Activated CD8-positive, alpha-beta T cell treated with anti-CD3 and anti-CD28 coated beads, Interleukin-2, amount 10 ng/mL, durations not matched to agents 7 days and 5 days (primary cell): ENCODE measurements at regions of chr1 and their contacts with region 1.

Region 1: GRCh38 chr1:205061665-205062069 is 18.7 kb downstream of the CNTN2 start:
- DNase-seq: peak; percentile 81
- ATAC-seq: peak; percentile 72
- H3K4me3 Mint-ChIP-seq: no peak overlapping the region
- H3K27ac Mint-ChIP-seq: no peak overlapping the region
- H3K4me1 Mint-ChIP-seq: no peaks in the 10 kb centered on the region
- H3K27me3 Mint-ChIP-seq: no peaks in the 10 kb centered on the region

Region 2: GRCh38 chr1:204941421-204942338 is 120.0 kb before region 1 on chr1:
- CTCF ChIA-PET with region 1: interaction called, 10 read pairs
- POLR2A ChIA-PET with region 1: no interaction called
- DNase-seq: peak; percentile 67
- ATAC-seq: peak; percentile 58
- H3K4me3 Mint-ChIP-seq: no peak overlapping the region
- H3K27ac Mint-ChIP-seq: no peak overlapping the region
- H3K4me1 Mint-ChIP-seq: peaks cover 6% of the 10 kb centered on the region
- H3K27me3 Mint-ChIP-seq: peaks cover 13% of the 10 kb centered on the region

Region 3: DNA sequence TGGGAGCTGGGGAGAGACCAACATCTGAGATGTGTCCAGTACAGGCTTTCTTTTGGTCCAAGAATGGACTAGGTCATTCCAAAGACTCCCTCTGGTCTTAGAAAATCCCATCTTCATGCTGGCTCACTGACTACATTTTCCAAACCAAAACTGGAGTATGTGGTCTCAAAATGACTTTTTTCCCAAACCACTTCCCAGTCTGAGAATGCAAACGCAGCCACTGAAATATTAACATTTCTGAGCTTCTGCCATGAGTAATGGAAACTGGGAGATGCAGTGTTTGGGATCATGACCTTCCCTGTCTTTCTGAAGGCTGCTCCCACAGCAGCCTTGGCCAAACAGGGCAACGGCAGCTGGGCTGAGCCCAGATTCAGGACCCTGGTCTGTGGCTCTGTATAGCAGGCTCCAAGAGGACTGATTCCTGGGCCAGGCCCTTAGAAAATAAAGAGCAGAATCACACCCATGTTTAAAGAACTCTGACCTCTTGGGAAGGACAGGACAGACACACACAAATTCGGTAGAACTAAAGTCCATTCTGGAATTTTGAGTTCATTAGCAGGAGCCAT is 80.7 kb before region 1 on chr1:
- CTCF ChIA-PET with region 1: interaction called, 236 read pairs
- POLR2A ChIA-PET with region 1: no interaction called
- DNase-seq: no peak
- ATAC-seq: no peak
- H3K4me3 Mint-ChIP-seq: no peak overlapping the region
- H3K27ac Mint-ChIP-seq: no peak overlapping the region
- H3K4me1 Mint-ChIP-seq: peaks cover 8% of the 10 kb centered on the region
- H3K27me3 Mint-ChIP-seq: peaks cover 17% of the 10 kb centered on the region

Region 4: DNA sequence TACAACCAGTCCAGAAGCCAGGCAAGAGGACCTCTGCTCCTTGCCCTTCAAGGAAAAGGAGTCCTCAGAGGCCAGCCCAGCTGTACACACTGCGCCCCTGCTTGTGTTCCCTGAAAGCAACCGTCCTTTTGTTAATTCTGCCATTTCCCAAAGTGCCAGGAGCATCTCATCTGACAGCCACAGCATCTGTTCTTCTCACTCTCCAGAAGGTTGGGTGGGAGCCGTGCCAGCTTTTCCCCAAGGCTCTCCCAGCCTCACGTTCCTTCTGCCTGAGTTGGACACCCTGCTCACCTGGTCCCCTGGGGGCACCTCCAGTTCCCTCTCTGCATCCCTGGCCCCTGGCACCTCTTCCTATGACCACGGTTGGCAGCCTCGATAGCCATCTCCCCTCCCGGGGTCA is 29.2 kb before region 1 on chr1:
- CTCF ChIA-PET with region 1: interaction called, 15 read pairs
- POLR2A ChIA-PET with region 1: no interaction called
- DNase-seq: no peak
- ATAC-seq: no peak
- H3K4me3 Mint-ChIP-seq: no peak overlapping the region
- H3K27ac Mint-ChIP-seq: no peak overlapping the region
- H3K4me1 Mint-ChIP-seq: no peaks in the 10 kb centered on the region
- H3K27me3 Mint-ChIP-seq: peaks cover 5% of the 10 kb centered on the region

Region 5: DNA sequence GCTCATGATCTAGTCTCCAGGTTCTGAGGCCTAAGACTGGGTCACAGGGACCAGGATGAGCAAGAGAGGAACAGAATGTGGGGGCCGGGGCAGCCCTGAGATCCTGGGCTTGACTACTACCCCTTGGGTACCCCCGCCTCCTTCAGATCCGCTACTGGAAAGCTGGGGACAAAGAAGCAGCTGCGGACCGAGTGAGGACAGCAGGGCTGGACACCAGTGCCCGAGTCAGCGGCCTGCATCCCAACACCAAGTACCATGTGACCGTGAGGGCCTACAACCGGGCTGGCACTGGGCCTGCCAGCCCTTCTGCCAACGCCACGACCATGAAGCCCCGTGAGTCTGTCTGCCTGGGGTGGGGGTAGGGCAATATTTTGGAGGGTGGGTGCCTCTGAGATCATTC is 10.1 kb after region 1 on chr1:
- CTCF ChIA-PET with region 1: interaction called, 81 read pairs
- POLR2A ChIA-PET with region 1: no interaction called
- DNase-seq: no peak
- ATAC-seq: no peak
- H3K4me3 Mint-ChIP-seq: no peak overlapping the region
- H3K27ac Mint-ChIP-seq: no peak overlapping the region
- H3K4me1 Mint-ChIP-seq: no peaks in the 10 kb centered on the region
- H3K27me3 Mint-ChIP-seq: no peaks in the 10 kb centered on the region

Region 6: GRCh38 chr1:205141236-205142101 is 79.8 kb after region 1 on chr1:
- CTCF ChIA-PET with region 1: interaction called, 13 read pairs
- POLR2A ChIA-PET with region 1: no interaction called
- DNase-seq: peak; percentile 86
- ATAC-seq: peak; percentile 92
- H3K4me3 Mint-ChIP-seq: no peak overlapping the region
- H3K27ac Mint-ChIP-seq: no peak overlapping the region
- H3K4me1 Mint-ChIP-seq: peaks cover 7% of the 10 kb centered on the region
- H3K27me3 Mint-ChIP-seq: no peaks in the 10 kb centered on the region